ENCODE measurements at regions of chr1 and their contacts with region 1.

Region 1: GRCh38 chr1:19744886-19745285 is 54.8 kb downstream of the TMCO4 start:
- DNase-seq: no peak
- H3K4me3 ChIP-seq: no peak overlapping the region
- H3K27ac ChIP-seq: no peak overlapping the region
- H3K4me1 ChIP-seq: no peaks in the 10 kb centered on the region
- H3K27me3 ChIP-seq: no peaks in the 10 kb centered on the region
- CTCF ChIP-seq: no peak
- POLR2A ChIP-seq: no peak

Region 2: DNA sequence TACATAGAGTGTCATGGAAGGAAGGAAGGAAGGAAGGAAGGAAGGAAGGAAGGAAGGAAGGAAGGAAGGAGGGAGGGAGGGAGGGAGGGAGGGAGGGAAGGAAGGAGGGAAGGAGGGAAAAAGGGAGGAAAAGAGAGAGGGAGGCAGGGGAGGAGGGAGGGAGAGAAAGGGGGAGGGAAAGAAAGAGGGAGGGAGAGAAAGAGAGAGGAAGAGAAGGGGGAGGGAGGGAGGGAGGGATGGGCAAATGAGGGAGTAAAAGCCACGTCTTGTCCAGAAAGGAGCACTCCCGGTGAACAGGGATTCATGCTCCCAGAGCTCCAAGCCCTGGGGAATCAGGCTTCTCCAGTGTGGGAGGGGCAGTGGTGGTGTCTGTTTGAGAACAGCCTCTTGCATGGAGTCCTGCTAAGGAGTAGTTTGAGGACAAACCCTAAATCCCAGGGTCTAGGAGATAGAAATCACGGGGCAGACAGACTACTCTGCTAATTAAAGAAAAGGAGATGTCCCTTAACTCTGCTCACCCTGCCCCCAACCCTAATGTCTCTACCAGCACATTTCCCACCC is 957.0 kb before region 1 on chr1:
- intact Hi-C with region 1: loop called (anchors 5 kb)
- DNase-seq: no peak
- H3K4me3 ChIP-seq: no peak overlapping the region
- H3K27ac ChIP-seq: no peak overlapping the region
- H3K4me1 ChIP-seq: no peaks in the 10 kb centered on the region
- H3K27me3 ChIP-seq: peaks cover 0 to 44% of the 10 kb centered on the region in 2 donors
- CTCF ChIP-seq: no peak
- POLR2A ChIP-seq: no peak

Region 3: GRCh38 chr1:19676438-19676922 is 68.4 kb before region 1 on chr1:
- intact Hi-C with region 1: no loop called
- DNase-seq: no peak
- H3K4me3 ChIP-seq: no peak overlapping the region
- H3K27ac ChIP-seq: no peak overlapping the region
- H3K4me1 ChIP-seq: no peaks in the 10 kb centered on the region
- H3K27me3 ChIP-seq: no peaks in the 10 kb centered on the region
- CTCF ChIP-seq: no peak
- POLR2A ChIP-seq: no peak

Measured in breast epithelium (tissue), 4 donors.